ENCODE measurements at regions of chr2 and their contacts with region 1.

Region 1: DNA sequence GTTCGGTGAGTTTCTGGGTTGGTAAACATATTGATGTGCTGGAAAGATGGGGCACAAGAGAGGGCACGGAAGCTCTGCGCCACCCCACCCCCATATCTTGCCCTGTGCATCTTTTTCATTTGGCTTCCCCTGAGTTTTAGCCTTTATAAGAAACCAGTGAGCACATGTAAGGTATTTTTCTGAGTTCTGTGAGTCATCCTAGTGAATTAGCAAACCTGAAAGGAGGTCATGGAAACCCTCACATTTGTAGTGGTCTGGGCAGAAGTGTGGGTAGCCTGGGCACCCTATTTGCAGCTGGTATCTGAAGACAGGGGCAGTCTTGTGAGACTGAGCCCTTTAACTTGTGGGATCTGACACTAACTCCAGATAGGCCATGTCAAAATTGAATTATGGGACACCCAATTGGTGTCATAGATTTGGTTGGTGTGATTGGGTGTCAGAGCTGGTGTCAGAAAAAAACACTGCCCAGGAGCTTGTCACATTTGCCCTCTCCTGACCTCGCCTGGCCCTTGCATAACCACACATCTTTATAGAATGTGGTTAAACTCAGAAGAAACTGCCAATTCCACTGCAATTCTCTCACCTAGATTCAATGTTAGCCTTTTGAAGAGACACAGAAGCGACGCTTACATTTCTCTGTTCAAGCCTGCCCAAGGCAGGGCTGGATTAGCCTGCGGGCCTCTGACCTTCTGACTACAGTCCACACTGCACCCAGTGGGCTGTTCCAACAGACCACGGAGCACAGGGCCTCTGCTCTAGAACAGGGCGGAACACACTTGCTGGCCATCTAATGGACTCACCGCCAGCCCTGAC is 12.0 kb upstream of the GALM start:
- DNase-seq: peak; percentile 49
- H3K4me3 Mint-ChIP-seq: peak overlapping the region; percentile 16
- H3K27ac Mint-ChIP-seq: peak overlapping the region; percentile 90
- H3K4me1 Mint-ChIP-seq: peaks cover 64% of the 10 kb centered on the region
- H3K27me3 Mint-ChIP-seq: no peaks in the 10 kb centered on the region

Region 2: GRCh38 chr2:36982467-36982866 is 1671.5 kb before region 1 on chr2:
- CTCF ChIA-PET with region 1: no interaction called
- POLR2A ChIA-PET with region 1: no interaction called
- DNase-seq: no peak
- H3K4me3 Mint-ChIP-seq: no peak overlapping the region
- H3K27ac Mint-ChIP-seq: no peak overlapping the region
- H3K4me1 Mint-ChIP-seq: no peaks in the 10 kb centered on the region
- H3K27me3 Mint-ChIP-seq: no peaks in the 10 kb centered on the region

Region 3: DNA sequence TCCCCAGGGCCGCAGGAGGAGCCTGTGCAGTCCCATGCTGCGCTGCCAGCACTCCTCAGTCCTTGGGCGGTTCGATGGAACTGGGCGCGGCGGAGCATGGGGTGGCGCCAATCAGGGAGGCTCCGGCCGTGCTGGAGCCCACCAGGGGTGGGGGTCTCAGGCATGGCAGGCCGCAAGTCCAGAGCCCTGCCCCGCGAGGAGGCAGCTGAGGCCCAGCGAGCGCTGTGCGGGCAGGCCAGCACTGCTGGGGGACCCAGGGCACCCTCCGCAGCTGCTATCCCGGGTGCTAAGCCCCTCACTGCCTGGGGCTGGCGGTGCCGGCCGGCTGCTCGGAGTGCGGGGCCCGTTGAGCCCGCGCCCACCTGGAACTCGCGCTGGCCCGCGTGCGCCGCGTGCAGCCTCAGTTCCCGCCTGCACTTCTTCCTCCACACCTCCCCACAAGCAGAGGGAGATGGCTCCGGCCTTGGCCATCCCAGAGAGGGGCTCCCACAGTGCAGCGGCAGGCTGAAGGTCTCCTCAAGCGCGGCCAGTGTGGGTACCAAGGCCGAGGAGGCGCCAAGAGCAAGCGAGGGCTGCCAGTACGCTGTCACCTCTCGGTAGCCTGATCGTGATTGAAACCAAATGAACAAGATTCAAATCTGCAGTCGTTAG is 10.8 kb before region 1 on chr2:
- CTCF ChIA-PET with region 1: interaction called, 13 read pairs
- POLR2A ChIA-PET with region 1: no interaction called
- DNase-seq: no peak
- H3K4me3 Mint-ChIP-seq: peak overlapping the region; percentile 50
- H3K27ac Mint-ChIP-seq: peak overlapping the region; percentile 95
- H3K4me1 Mint-ChIP-seq: peaks cover 51% of the 10 kb centered on the region
- H3K27me3 Mint-ChIP-seq: no peaks in the 10 kb centered on the region

Region 4: GRCh38 chr2:38665854-38666555 is 12.1 kb after region 1 on chr2 and contains the start of gene GALM:
- CTCF ChIA-PET with region 1: interaction called, 28 read pairs
- POLR2A ChIA-PET with region 1: interaction called, 7 read pairs
- DNase-seq: peak; percentile 64
- H3K4me3 Mint-ChIP-seq: peak within 1 kb of the TSS; percentile 85
- H3K27ac Mint-ChIP-seq: peak within 1 kb of the TSS; percentile 95
- H3K4me1 Mint-ChIP-seq: peaks cover 70% of the 10 kb centered on the region
- H3K27me3 Mint-ChIP-seq: no peaks in the 10 kb centered on the region
- total RNA-seq, gene GALM: 39.7 to 41.1 TPM